ENCODE measurements at regions of chr1 and their contacts with region 1.

Region 1: DNA sequence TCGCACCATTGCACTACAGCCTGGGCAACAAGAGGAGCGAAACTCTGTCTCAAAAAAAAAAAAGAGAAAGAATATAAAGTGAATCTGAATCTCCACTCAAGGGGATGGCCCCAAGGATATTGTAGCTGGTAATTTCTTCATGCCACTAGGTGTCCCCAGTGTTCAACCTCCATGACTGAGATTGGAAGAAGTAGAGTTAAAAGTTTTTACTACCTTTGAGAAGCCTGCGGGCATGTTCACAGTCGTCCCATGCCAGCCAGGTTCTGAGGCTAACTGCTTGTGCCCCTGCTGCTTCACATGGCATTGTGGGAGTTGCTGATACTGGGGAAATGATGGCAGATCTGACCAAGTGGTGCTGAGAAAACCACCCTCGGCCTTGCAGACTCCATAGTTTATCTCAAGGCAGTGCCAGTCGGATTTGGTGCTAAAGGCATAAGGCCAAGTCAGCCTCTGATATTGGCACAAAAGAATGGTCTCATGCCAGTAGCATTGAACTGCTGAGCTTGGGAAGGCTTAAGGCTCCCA is 10.8 kb upstream of the SHISA4 start:
- DNase-seq: peak; percentile 85
- H3K4me3 Mint-ChIP-seq: no peak overlapping the region
- H3K27ac Mint-ChIP-seq: no peak overlapping the region
- H3K4me1 Mint-ChIP-seq: peaks cover 21% of the 10 kb centered on the region
- H3K27me3 Mint-ChIP-seq: no peaks in the 10 kb centered on the region
- CTCF ChIP-seq: peak; percentile 93

Region 2: DNA sequence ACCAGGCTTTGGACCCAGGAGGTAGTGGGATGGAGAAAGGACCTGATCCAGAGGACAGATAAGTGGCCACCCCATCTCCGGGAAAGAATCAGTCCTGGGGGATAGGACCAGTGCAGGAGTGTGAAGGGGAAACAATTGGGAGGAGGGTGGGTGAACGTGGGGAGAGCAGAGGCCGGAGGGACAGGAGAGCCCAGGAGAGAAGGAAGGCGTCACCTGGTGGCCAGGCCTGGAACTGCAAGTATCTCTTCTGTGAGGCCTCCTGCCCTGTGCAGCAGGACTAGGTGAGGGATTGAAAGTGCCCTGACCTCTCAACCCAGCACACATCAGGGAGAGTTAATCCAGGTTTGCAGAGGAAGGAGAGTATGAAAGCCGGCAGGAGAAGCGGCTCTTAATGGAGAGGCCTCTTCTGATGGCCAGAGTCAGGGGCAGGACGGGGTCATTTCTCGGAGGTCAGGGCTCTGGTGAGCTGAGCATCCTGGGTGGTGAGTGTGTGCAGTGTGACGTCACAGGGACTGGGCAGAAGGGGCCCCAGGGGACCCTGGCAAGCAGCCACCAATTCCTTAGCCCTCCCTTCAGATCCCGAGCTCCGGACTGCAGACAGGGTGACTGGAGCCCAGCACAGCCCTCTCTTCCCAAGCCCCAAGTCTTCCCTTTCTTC is 469.6 kb before region 1 on chr1:
- CTCF ChIA-PET with region 1: no interaction called
- POLR2A ChIA-PET with region 1: no interaction called
- intact Hi-C with region 1: no loop called
- DNase-seq: peak; percentile 90
- H3K4me3 Mint-ChIP-seq: no peak overlapping the region
- H3K27ac Mint-ChIP-seq: no peak overlapping the region
- H3K4me1 Mint-ChIP-seq: peaks cover 5% of the 10 kb centered on the region
- H3K27me3 Mint-ChIP-seq: peaks cover 32% of the 10 kb centered on the region
- CTCF ChIP-seq: peak; percentile 100

Region 3: DNA sequence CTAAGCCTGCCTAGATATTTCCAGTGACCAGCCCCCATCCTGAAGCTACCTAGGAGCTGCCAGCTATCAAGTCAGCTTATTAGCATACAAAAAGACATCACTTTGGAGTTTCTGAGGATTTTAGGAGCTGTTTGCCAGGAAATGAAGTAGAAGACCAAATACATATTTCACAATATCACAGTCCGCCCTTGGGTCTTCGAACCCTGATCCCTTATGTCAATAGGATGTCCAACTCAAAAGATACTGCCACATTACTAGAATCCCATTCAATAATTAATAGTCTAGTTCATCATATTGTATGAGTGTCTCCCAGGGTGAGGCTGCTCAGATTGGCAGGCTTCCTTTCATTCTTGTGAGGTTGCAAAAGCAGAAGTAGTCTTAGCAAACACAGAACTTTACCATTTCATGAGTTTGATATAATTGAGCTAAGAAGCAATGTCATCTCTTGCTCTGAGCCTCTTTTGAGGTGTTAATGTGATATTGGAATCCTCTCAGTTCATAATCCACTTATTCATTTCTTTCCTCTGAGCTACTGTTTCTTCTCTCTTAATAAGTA is 35.4 kb before region 1 on chr1:
- CTCF ChIA-PET with region 1: interaction called, 14 read pairs
- POLR2A ChIA-PET with region 1: interaction called, 4 read pairs
- intact Hi-C with region 1: no loop called
- DNase-seq: no peak
- H3K4me3 Mint-ChIP-seq: no peak overlapping the region
- H3K27ac Mint-ChIP-seq: peak overlapping the region; percentile 11
- H3K4me1 Mint-ChIP-seq: peaks cover 41% of the 10 kb centered on the region
- H3K27me3 Mint-ChIP-seq: no peaks in the 10 kb centered on the region
- CTCF ChIP-seq: no peak

Region 4: DNA sequence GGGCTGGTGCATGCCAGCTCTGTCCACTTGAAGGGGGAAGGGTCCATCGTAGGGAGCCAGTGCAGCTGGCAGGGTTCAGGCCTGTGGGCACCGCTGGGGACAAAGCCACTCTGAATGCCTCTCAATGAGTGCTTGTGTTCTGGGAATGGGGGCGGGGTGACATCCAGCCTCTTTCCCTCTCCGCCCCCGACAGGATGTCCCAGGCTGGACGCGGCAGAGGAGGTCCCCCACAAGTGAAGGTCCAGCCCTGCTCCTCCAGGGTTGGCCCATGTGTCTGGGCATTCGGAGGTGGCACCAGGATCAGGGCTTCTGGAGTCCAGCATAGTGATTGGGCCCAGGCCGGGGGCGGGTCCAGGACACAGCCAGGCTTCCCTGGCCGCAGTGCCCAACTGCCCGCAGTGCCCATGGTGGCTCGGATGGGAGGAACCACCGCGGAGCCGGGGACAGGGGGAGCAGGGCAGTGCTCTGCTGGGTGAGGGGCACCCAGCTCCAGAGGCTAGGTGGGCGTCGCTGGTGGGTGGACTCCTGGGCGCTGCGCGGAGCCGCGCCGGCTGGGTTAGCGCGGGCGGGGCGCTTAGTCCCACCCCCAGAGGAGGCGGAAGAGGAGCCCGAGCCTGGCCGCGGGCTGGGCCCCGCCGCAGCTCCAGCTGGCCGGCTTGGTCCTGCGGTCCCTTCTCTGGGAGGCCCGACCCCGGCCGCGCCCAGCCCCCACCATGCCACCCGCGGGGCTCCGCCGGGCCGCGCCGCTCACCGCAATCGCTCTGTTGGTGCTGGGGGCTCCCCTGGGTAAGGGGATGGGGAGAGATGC is 10.5 kb after region 1 on chr1 and contains the start of gene SHISA4:
- CTCF ChIA-PET with region 1: interaction called, 162 read pairs
- POLR2A ChIA-PET with region 1: interaction called, 21 read pairs
- intact Hi-C with region 1: no loop called
- DNase-seq: peak; percentile 77
- H3K4me3 Mint-ChIP-seq: peak within 1 kb of the TSS; percentile 77
- H3K27ac Mint-ChIP-seq: peak within 1 kb of the TSS; percentile 21
- H3K4me1 Mint-ChIP-seq: peaks cover 21% of the 10 kb centered on the region
- H3K27me3 Mint-ChIP-seq: no peaks in the 10 kb centered on the region
- CTCF ChIP-seq: no peak
- total RNA-seq, gene SHISA4: 7.6 and 20.9 TPM in 2 replicates

Region 5: DNA sequence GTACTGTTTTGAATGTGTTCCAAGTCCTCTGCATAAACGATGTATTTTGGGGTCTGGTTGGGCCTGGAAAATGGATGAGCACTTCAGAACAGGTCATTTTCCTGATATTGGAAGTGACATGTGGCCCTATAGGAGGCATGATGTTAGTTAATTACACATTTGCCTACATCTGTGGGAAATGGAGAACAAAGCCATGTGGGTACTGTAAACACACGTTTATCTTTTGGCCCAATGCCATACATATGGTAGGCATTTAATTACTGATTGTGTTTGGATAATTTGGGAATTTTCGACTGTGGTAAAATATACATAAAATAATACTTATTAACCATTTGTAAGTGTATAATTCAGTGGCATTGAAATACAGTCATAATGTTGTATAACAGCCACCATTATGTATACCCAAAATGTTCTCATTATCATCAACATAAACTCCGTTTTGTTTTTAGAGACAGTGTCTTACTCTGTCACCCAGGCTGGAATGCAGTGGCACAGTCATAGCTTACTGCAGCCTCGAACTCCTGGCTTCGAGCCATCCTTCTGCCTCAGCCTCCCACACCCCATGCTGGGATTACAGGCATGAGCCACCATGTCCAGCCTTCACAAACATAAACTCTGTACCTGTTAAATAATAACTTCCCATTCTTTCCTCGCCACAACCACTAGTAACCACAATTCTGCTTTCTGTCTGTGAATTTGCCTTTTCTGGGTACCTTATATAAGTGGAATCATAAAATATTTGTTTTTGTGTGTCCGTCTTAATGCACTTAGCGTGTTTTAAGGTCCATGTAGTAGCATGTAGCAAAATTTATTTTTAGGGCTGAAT is 92.6 kb after region 1 on chr1:
- CTCF ChIA-PET with region 1: interaction called, 160 read pairs
- POLR2A ChIA-PET with region 1: interaction called, 50 read pairs
- intact Hi-C with region 1: loop called (anchors 1 kb)
- DNase-seq: no peak
- H3K4me3 Mint-ChIP-seq: no peak overlapping the region
- H3K27ac Mint-ChIP-seq: no peak overlapping the region
- H3K4me1 Mint-ChIP-seq: peaks cover 15% of the 10 kb centered on the region
- H3K27me3 Mint-ChIP-seq: peaks cover 8% of the 10 kb centered on the region
- CTCF ChIP-seq: no peak

Region 6: DNA sequence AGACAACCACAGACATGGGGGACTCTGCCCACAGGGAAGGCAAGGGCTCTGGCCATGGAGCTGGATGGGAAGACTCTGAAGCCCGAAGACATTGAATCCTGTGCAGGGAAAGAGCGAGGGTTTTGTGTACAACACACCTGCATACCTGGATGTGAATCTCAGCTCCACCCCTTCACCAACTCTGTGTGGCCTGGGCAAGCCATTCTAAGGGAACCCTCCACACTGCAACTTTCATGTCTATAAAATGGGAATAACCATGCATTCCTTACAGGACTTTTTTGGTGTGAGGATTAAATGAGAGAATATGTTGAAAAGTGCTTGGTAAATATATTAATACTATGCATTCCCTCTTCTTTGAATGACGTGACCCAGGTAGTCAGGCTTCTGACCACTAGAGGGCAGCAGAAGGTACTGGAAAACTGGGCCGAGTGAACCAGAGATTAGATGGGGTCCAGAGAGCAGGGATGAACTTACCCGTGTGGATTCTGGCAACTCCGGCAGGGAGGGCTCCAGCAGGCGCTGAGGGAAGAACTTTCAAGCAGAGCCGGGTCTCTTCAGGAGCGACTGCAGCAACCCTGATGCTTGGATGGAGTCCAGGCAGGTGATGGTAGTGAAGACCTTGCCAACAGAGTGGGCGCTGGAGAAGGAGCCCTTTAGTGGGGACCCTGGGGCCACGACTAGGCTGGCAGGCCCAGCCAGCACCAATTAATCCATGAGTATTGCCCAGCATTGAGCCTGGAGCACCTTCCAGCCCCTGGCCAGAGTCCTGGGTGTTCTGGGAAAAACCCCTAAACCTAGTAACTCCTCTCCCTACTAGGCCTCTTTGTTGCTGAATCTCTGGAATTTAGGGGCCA is 131.6 kb after region 1 on chr1:
- CTCF ChIA-PET with region 1: interaction called, 11 read pairs
- POLR2A ChIA-PET with region 1: no interaction called
- intact Hi-C with region 1: no loop called
- DNase-seq: peak; percentile 95
- H3K4me3 Mint-ChIP-seq: no peak overlapping the region
- H3K27ac Mint-ChIP-seq: no peak overlapping the region
- H3K4me1 Mint-ChIP-seq: peaks cover 26% of the 10 kb centered on the region
- H3K27me3 Mint-ChIP-seq: no peaks in the 10 kb centered on the region
- CTCF ChIP-seq: peak; percentile 97

Region 7: DNA sequence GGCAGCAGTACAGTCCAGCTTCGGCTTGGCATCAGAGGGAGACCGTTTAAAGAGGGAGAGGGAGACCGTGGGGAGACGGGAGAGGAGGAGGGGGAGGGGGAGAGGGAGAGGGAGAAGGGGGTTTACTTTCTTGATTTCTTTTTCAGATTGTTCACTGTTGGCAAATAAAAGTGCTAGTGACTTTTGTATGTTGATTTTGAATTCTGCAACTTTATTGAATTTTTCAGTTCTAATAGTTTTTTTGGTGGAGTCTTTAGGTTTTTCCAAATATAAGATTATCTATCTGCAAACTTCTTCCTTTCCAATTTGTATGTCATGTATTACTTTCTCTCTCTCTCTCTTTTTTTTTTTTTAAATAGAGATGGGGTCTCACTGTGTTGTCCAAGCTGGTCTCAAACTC is 574.6 kb after region 1 on chr1:
- CTCF ChIA-PET with region 1: no interaction called
- POLR2A ChIA-PET with region 1: no interaction called
- intact Hi-C with region 1: no loop called
- DNase-seq: no peak
- H3K4me3 Mint-ChIP-seq: no peak overlapping the region
- H3K27ac Mint-ChIP-seq: no peak overlapping the region
- H3K4me1 Mint-ChIP-seq: peaks cover 18% of the 10 kb centered on the region
- H3K27me3 Mint-ChIP-seq: no peaks in the 10 kb centered on the region
- CTCF ChIP-seq: no peak